ENCODE measurements at regions of chr10 and their contacts with region 1.

Region 1: DNA sequence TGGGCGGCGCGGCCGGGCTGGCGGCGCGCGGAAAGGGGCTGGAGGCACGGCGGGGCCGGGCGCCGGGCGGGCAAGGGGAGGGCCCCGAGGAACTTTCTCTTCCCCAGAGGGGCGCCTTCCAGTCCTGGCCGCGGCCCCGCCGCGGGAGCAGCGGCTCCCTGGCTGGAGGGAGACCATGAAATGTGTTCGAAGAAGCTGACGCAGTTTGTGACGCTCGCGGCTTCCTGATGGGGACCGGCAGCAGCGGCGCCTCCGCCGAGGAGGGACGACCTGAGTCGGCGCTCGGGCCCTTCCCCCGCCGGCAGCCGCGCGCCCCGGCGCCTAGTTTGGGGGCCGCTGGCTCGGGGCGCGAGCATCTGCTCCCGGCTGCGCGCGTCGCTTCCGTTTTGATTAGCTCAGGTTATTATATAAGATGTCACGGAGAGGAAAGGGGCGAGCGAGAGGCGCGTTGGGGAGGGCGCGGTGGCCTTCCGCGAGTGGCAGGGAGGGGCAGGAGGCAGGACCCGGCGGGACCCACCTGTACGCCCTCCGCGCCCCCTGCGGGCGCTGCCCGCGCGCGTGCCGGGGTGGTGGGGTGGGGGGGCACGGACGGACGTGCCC is 57.1 kb upstream of the PCGF5 start:
- DNase-seq: peak; percentile 92
- ATAC-seq: peak; percentile 48
- H3K4me3 ChIP-seq: peak overlapping the region; percentile 34 to 84 (median 71)
- H3K4me3 Mint-ChIP-seq: peak overlapping the region; percentile 94
- H3K27ac ChIP-seq: peak overlapping the region; percentile 85 to 90
- H3K27ac Mint-ChIP-seq: peak overlapping the region; percentile 97
- H3K4me1 ChIP-seq: peaks cover 14 to 15% of the 10 kb centered on the region in 2 donors
- H3K4me1 Mint-ChIP-seq: peaks cover 49% of the 10 kb centered on the region
- H3K27me3 ChIP-seq: no peaks in the 10 kb centered on the region
- H3K27me3 Mint-ChIP-seq: no peaks in the 10 kb centered on the region
- CTCF ChIP-seq: peak; percentile 34

Region 2: GRCh38 chr10:90912174-90912573 is 251.2 kb before region 1 on chr10:
- CTCF ChIA-PET with region 1: interaction called, 7 read pairs
- POLR2A ChIA-PET with region 1: no interaction called
- intact Hi-C with region 1: loop called (anchors 5 kb)
- DNase-seq: no peak
- ATAC-seq: no peak
- H3K4me3 ChIP-seq: no peak overlapping the region
- H3K4me3 Mint-ChIP-seq: no peak overlapping the region
- H3K27ac ChIP-seq: no peak overlapping the region
- H3K27ac Mint-ChIP-seq: no peak overlapping the region
- H3K4me1 ChIP-seq: no peaks in the 10 kb centered on the region
- H3K4me1 Mint-ChIP-seq: peaks cover 2% of the 10 kb centered on the region
- H3K27me3 ChIP-seq: no peaks in the 10 kb centered on the region
- H3K27me3 Mint-ChIP-seq: no peaks in the 10 kb centered on the region
- CTCF ChIP-seq: no peak

Region 3: DNA sequence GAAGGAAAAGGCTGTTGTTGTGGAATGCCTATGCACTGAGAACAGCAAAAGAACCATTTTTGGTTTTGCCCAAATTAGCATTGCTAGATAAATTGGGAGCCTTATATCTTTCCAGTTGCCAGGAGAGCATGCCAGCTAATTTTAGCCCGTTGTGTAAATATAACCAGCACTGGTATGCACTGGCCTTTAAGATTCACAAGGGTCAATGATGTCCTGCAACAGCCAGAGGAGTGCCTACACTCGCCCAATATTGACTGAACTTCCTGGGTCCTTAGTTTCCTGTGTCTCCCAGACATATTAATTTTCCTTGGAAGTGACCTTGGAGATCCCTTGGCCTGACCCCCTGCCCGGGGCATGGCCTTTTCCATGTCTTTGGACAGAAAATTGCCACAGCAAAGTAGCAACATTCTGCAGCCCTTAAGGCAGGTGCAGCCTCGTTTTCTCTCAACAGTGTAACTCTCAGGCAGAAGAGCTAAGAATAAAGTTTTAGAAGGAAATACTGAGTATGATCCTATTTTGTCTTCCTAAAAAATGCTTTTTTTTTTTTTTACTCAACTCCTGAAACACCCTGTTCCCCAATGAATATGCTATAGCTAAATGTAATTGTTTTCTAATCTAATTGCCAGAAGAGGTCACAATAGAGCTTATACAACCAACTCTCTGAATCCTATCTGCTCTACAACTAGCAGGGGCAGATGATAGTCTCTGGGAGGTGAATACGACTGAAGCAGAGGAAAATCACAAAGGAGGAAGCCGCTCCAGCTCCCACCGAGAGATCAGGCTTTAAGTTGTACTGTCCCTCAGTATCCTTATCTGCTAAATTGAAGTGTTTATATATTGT is 74.8 kb before region 1 on chr10:
- CTCF ChIA-PET with region 1: interaction called, 11 read pairs
- POLR2A ChIA-PET with region 1: interaction called, 8 read pairs
- intact Hi-C with region 1: loop called (anchors 2 kb)
- DNase-seq: peak; percentile 57
- ATAC-seq: peak; percentile 79
- H3K4me3 ChIP-seq: no peak overlapping the region
- H3K4me3 Mint-ChIP-seq: no peak overlapping the region
- H3K27ac ChIP-seq: no peak overlapping the region
- H3K27ac Mint-ChIP-seq: no peak overlapping the region
- H3K4me1 ChIP-seq: no peaks in the 10 kb centered on the region
- H3K4me1 Mint-ChIP-seq: peaks cover 3% of the 10 kb centered on the region
- H3K27me3 ChIP-seq: no peaks in the 10 kb centered on the region
- H3K27me3 Mint-ChIP-seq: no peaks in the 10 kb centered on the region
- CTCF ChIP-seq: peak; percentile 48

Region 4: GRCh38 chr10:91117505-91117904 is 45.9 kb before region 1 on chr10:
- CTCF ChIA-PET with region 1: no interaction called
- POLR2A ChIA-PET with region 1: no interaction called
- intact Hi-C with region 1: no loop called
- DNase-seq: no peak
- ATAC-seq: no peak
- H3K4me3 ChIP-seq: no peak overlapping the region
- H3K4me3 Mint-ChIP-seq: no peak overlapping the region
- H3K27ac ChIP-seq: no peak overlapping the region
- H3K27ac Mint-ChIP-seq: no peak overlapping the region
- H3K4me1 ChIP-seq: no peaks in the 10 kb centered on the region
- H3K4me1 Mint-ChIP-seq: peaks cover 3% of the 10 kb centered on the region
- H3K27me3 ChIP-seq: no peaks in the 10 kb centered on the region
- H3K27me3 Mint-ChIP-seq: no peaks in the 10 kb centered on the region
- CTCF ChIP-seq: no peak

Region 5: GRCh38 chr10:91185239-91185875 is 22.0 kb after region 1 on chr10:
- CTCF ChIA-PET with region 1: interaction called, 3 read pairs
- POLR2A ChIA-PET with region 1: no interaction called
- intact Hi-C with region 1: loop called (anchors 2 kb)
- DNase-seq: no peak
- ATAC-seq: no peak
- H3K4me3 ChIP-seq: no peak overlapping the region
- H3K4me3 Mint-ChIP-seq: no peak overlapping the region
- H3K27ac ChIP-seq: no peak overlapping the region
- H3K27ac Mint-ChIP-seq: no peak overlapping the region
- H3K4me1 ChIP-seq: peaks cover 13 to 17% of the 10 kb centered on the region in 2 donors
- H3K4me1 Mint-ChIP-seq: peaks cover 79% of the 10 kb centered on the region
- H3K27me3 ChIP-seq: no peaks in the 10 kb centered on the region
- H3K27me3 Mint-ChIP-seq: no peaks in the 10 kb centered on the region
- CTCF ChIP-seq: no peak

Region 6: DNA sequence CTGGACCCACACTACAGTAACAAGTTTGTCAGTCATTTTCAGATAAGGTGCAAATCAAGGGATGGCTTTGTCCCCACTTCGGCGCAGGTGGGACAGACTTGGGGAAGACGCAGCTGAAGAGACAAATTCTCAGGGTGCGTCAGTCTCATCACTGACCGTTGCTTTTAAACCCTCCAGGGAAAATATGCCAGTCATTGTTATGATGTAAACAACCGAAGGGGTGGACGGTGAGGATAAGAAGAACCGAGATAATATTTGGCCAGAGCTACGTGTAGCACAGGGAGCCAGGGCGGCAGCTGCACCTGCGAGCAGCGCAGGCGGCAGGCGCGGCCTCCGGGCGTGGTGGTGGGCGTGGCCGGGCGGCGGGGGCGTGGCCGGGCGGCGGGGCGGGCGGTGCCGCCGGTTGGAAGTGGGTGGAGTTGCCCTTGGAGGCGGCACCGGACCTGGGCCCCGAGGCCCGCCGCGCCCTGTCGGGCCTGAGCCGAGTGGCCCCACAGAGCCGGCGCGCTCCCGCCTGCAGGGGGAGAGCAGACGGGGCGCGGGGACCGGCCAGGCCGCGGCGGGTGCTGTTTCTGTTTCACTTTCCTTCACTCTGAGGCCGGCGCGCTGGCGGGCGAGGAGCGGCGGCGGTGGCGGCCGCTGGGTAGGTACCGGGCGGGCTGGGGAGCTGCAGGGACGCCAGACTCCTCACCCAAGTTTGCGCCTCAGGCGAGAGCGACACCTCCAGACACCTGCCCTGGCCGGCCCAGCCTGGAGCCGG is 57.0 kb after region 1 on chr10 and contains the start of gene PCGF5:
- CTCF ChIA-PET with region 1: interaction called, 8 read pairs
- POLR2A ChIA-PET with region 1: interaction called, 39 read pairs
- intact Hi-C with region 1: loop called (anchors 1 kb)
- DNase-seq: peak; percentile 96
- ATAC-seq: peak; percentile 94
- H3K4me3 ChIP-seq: peak within 1 kb of the TSS; percentile 60 to 89 (median 76)
- H3K4me3 Mint-ChIP-seq: peak within 1 kb of the TSS; percentile 92
- H3K27ac ChIP-seq: peak within 1 kb of the TSS; percentile 71 to 90
- H3K27ac Mint-ChIP-seq: peak within 1 kb of the TSS; percentile 97
- H3K4me1 ChIP-seq: peaks cover 34 to 36% of the 10 kb centered on the region in 2 donors
- H3K4me1 Mint-ChIP-seq: peaks cover 68% of the 10 kb centered on the region
- H3K27me3 ChIP-seq: no peaks in the 10 kb centered on the region
- H3K27me3 Mint-ChIP-seq: no peaks in the 10 kb centered on the region
- CTCF ChIP-seq: peak; percentile 14
- total RNA-seq, gene PCGF5: 102 TPM in 2 replicates